Activated B cell treated with CpG ODN at 0.5 μM for 24 hours (primary cell): ENCODE measurements at regions of chr20 and their contacts with region 1.

Region 1: GRCh38 chr20:49676581-49677291 is 36.9 kb downstream of the B4GALT5 start:
- DNase-seq: no peak
- ATAC-seq: peak; percentile 78
- H3K4me3 Mint-ChIP-seq: peak overlapping the region; percentile 47
- H3K27ac Mint-ChIP-seq: peak overlapping the region; percentile 87
- H3K4me1 Mint-ChIP-seq: peaks cover 72% of the 10 kb centered on the region
- H3K27me3 Mint-ChIP-seq: no peaks in the 10 kb centered on the region
- CTCF ChIP-seq: no peak

Region 2: GRCh38 chr20:49747707-49748524 is 71.2 kb after region 1 on chr20:
- CTCF ChIA-PET with region 1: no interaction called
- POLR2A ChIA-PET with region 1: interaction called, 11 read pairs
- intact Hi-C with region 1: no loop called
- DNase-seq: no peak
- ATAC-seq: no peak
- H3K4me3 Mint-ChIP-seq: no peak overlapping the region
- H3K27ac Mint-ChIP-seq: no peak overlapping the region
- H3K4me1 Mint-ChIP-seq: peaks cover 16% of the 10 kb centered on the region
- H3K27me3 Mint-ChIP-seq: no peaks in the 10 kb centered on the region
- CTCF ChIP-seq: no peak